K562 (cell line): ENCODE measurements at regions of chrX and their contacts with region 1.

Region 1: DNA sequence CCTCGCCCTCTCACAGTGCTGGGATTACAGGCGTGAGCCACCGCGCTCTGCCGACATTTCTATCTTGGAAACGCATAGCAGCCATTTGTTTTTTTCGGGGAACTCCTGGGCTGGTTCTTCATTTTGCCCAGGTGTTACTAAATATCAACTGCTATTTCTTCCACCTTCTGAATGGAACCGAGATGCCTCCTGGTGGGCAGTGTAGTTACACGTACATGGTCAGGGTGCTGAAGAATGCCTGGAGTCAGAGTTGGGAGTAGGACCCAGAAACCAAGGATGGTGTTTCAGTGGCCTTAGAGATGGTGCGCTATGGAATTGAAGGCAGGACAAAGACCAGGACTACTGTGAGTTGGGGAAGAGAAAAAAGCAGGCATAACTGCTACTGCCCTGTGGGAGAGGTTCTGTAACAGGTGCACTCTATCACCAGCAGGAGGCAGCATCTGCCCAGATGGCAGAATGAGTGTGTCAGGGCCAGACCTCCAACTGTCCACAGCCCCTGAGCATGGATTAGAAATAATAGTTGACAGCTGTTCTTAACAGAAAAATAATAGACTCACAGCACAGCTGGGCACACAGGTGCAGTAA is 81.7 kb downstream of the ZC4H2 start:
- DNase-seq: peak; percentile 13 to 33 (median 14)
- ATAC-seq: peak; percentile 87
- H3K4me3 ChIP-seq: no peak overlapping the region
- H3K27ac ChIP-seq: no peak overlapping the region
- H3K4me1 ChIP-seq: no peaks in the 10 kb centered on the region
- H3K27me3 ChIP-seq: no peaks in the 10 kb centered on the region
- CTCF ChIP-seq: peak; percentile 34 to 55 (median 48); a peak in 4 of 6 replicates
- EP300 ChIP-seq: no peak
- POLR2A ChIP-seq: no peak
- RAD21 ChIP-seq: peak; percentile 49 to 62

Region 2: DNA sequence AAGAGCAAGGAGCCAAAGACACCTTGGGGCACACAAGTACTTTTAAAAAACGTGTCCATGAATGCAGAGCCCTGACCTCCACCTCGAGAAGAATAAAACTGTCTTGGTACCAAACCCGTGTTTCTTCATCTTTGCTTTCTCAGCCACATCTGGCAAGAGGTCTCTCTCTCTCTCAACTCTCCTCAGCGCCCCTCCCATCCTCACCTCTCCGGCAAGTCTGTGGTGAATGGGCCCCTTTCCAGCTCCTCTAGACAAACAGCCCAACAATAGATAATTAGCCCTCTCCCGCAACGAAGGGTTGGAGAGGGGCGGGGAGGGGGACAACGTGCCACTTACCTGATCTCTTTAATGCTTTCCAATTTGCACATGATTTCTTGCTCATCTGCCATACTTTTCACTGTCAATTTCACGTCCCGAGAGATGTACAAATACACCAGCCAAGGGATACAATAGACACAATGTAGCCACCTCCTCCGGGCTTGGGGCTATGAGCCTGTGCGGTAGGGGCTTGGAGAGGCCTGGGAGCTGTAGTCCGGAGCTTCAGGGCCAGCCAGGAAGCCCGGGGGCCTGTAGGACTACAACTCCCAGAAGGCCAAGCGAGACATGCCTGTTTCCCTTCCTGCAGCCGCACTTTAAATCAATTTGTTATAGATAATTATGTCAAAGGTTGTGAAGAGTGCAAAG is 81.6 kb after region 1 on chrX and contains the start of gene ZC4H2:
- CTCF ChIA-PET with region 1: no interaction called
- POLR2A ChIA-PET with region 1: no interaction called
- in situ Hi-C with region 1: no loop called
- intact Hi-C with region 1: no loop called
- DNase-seq: peak; percentile 11 to 28 (median 24)
- ATAC-seq: peak; percentile 84
- H3K4me3 ChIP-seq: no peak within 1 kb of the TSS
- H3K27ac ChIP-seq: no peak within 1 kb of the TSS
- H3K4me1 ChIP-seq: peaks cover 0 to 3% of the 10 kb centered on the region in 2 experiments; a peak in 1 of 5 replicates
- H3K27me3 ChIP-seq: no peaks in the 10 kb centered on the region
- CTCF ChIP-seq: no peak
- EP300 ChIP-seq: no peak
- POLR2A ChIP-seq: no peak
- RAD21 ChIP-seq: no peak
- polyA plus RNA-seq, gene ZC4H2: 1.1 to 2.4 TPM

Region 3: GRCh38 chrX:65451663-65452062 is 557.1 kb after region 1 on chrX:
- CTCF ChIA-PET with region 1: no interaction called
- POLR2A ChIA-PET with region 1: no interaction called
- in situ Hi-C with region 1: no loop called
- intact Hi-C with region 1: loop called (anchors 5 kb)
- DNase-seq: peak; percentile 7 to 23 (median 10)
- ATAC-seq: no peak
- H3K4me3 ChIP-seq: no peak overlapping the region
- H3K27ac ChIP-seq: no peak overlapping the region
- H3K4me1 ChIP-seq: no peaks in the 10 kb centered on the region
- H3K27me3 ChIP-seq: no peaks in the 10 kb centered on the region
- CTCF ChIP-seq: peak; percentile 27 to 40 (median 37); a peak in 5 of 6 replicates
- EP300 ChIP-seq: no peak
- POLR2A ChIP-seq: no peak
- RAD21 ChIP-seq: peak in 1 of 2 experiments; percentile 53; a peak in 2 of 4 replicates